ENCODE measurements at regions of chr18 and their contacts with region 1.

Region 1: DNA sequence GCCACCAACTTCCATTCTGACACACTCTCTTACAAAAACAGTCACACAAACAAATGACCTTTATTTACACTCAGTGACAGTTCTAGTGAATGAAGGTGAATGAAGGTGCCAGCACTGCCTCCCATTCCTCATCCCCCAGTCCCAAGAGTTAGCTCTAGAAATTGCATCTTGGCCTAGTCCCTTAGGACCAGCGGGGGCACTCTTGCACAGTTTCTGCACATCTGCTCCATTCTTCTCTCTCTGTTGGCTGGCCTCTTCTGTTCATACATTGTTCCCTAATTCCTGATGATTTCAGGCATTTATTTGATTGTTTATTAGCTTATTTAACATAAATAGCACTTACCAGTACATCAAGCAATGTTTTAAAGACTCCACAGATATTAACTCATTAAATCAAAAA is 30.9 kb downstream of the GAREM1 start:
- DNase-seq: no peak
- ATAC-seq: no peak
- H3K4me3 ChIP-seq: no peak overlapping the region
- H3K27ac ChIP-seq: no peak overlapping the region
- H3K4me1 ChIP-seq: no peaks in the 10 kb centered on the region; the same call in 1 of the 2 replicates
- H3K27me3 ChIP-seq: no peaks in the 10 kb centered on the region
- CTCF ChIP-seq: peak; percentile 54

Region 2: DNA sequence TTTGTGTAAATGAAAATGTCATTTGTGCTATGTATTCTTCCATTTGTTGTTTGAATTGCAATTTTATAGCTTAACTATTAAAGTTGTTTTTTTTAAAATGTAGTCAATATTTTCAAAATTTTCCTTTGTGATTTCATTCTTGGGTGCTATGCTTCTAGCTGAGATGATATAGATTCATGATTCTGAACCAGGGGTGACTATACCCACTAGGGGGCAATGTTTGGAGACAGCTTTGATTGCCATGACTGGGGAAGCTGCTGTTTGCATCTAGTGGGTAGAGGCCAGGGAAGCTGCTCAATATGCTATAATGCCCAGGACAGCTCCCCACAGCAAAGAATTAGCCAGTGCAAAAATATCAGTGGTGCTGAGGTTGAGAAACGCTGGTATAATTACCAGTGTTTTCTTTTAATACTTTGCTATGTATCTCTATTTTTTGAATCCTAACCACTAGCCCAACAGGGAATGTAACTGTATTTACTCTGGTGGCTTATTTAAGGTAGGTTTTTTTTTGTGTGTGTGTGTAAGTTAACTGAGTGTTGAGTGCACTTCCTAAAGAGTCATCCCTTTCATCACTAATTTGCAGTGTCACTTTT is 150.2 kb before region 1 on chr18:
- CTCF ChIA-PET with region 1: interaction called, 10 read pairs
- POLR2A ChIA-PET with region 1: no interaction called
- in situ Hi-C with region 1: no loop called
- intact Hi-C with region 1: no loop called
- DNase-seq: peak; percentile 38
- ATAC-seq: peak; percentile 84
- H3K4me3 ChIP-seq: no peak overlapping the region
- H3K27ac ChIP-seq: no peak overlapping the region
- H3K4me1 ChIP-seq: no peaks in the 10 kb centered on the region
- H3K27me3 ChIP-seq: no peaks in the 10 kb centered on the region
- CTCF ChIP-seq: peak; percentile 75

Region 3: GRCh38 chr18:32349728-32350395 is 89.9 kb before region 1 on chr18:
- CTCF ChIA-PET with region 1: no interaction called
- POLR2A ChIA-PET with region 1: no interaction called
- in situ Hi-C with region 1: no loop called
- intact Hi-C with region 1: no loop called
- DNase-seq: peak; percentile 80
- ATAC-seq: no peak
- H3K4me3 ChIP-seq: no peak overlapping the region; a peak in 1 of 4 replicates
- H3K27ac ChIP-seq: no peak overlapping the region
- H3K4me1 ChIP-seq: peaks cover 6% of the 10 kb centered on the region; the same call in 1 of the 2 replicates
- H3K27me3 ChIP-seq: no peaks in the 10 kb centered on the region
- CTCF ChIP-seq: no peak

Measured in Panc1 (cell line).